ENCODE measurements at regions of chr5 and their contacts with region 1.

Region 1: DNA sequence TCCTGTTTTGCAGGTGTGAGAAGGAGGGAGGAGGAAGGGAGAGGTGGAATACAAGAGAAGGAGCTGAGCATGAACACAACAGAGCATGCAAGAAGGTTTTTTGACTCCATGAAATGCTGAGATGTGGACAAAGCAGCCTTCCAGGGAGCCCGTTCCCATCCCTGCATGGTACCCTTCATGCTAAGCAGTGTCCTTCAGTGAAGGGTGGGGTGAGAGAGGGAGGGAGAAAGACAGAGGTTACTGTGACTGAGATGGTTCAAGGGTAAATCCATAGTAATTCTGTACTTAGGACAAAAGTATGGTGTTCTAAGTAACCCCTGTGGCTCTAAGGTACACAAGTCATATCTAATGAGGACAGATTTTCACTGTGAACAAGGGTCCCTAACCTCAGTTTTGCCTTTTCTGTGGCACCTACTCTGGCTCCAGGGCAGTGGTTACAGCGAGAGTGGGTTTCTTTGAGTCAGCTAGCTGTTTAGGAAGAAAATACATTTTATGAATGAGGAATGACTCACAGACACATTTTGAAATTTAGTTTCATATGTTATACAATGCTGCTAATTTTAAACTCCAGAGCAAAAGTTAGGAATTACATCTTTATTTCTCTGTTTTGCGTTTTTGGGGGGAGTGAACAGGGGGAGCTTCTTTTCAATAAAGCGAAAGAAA is 184.9 kb upstream of the SLC12A2 start:
- DNase-seq: no peak
- ATAC-seq: no peak
- H3K4me3 ChIP-seq: no peak overlapping the region
- H3K27ac ChIP-seq: no peak overlapping the region
- H3K4me1 ChIP-seq: no peaks in the 10 kb centered on the region
- H3K27me3 ChIP-seq: no peaks in the 10 kb centered on the region
- CTCF ChIP-seq: no peak

Region 2: DNA sequence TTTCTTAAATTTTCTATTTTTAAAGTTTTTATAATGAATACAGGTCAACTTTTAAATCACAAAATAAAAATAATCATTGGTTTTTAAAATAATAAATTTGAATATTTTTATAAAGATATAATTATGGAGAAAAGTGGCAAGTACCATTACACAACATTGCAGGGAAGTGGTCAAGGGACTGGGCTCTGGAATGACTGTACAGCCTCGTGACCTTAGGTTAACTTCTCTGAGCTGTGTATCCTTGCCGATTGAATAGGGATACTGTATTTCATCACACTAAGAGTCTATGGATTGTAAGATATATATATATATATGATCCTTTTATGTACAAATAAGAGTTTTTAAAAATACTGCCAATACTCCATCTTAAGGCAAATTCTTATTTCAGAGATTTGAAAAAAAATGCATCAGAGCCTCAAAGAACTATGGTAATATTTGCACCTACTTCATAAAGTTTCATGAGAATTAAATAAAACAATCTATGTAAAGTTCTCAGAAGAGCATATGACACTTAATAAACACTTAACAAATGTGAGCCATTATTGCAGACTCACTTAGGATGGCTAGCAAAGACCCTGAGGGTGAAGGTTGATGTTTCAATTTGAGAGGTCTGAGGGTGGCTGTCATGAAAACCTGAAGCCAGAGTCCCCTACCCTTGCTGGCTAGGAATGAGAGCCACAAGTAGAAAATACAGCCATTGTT is 59.0 kb before region 1 on chr5:
- intact Hi-C with region 1: no loop called
- DNase-seq: no peak
- ATAC-seq: no peak
- H3K4me3 ChIP-seq: no peak overlapping the region
- H3K27ac ChIP-seq: no peak overlapping the region
- H3K4me1 ChIP-seq: peaks cover 0 to 22% (median 0%) of the 10 kb centered on the region in 9 donors
- H3K27me3 ChIP-seq: no peaks in the 10 kb centered on the region
- CTCF ChIP-seq: no peak

Region 3: DNA sequence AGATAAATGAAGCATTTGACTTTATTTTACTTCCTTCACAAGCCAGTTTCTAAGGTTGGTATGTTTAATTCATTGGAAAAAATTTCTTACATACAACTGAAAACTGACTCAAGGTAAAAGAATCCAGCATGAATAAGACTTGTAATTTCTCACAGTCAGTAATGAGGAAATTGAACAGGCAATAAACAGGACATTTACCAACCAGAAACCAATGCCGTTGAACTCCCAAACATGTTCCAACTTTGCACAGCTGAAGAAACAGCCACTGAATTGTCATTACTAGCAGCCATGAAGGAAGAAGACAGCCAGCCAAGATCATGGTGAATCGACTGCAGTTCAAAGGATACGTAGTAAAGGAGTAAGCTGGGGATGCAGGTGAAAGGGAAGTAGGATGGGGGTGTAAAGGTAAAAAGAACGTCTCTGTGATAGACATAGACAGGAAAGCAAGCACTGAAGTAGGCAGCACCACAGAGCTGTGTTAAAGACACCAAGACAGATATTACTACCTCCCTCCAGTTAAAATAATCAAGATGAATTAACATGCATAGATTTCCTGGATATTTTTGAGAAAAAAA is 163.6 kb after region 1 on chr5:
- intact Hi-C with region 1: loop called in 1 of 10 experiments (anchors 1 kb)
- DNase-seq: no peak
- ATAC-seq: no peak
- H3K4me3 ChIP-seq: no peak overlapping the region
- H3K27ac ChIP-seq: no peak overlapping the region
- H3K4me1 ChIP-seq: peaks cover 0 to 4% (median 0%) of the 10 kb centered on the region in 9 donors
- H3K27me3 ChIP-seq: no peaks in the 10 kb centered on the region
- CTCF ChIP-seq: no peak

Measured in heart right ventricle (tissue), 16 donors.